ENCODE measurements at regions of chr11 and their contacts with region 1.

Region 1: DNA sequence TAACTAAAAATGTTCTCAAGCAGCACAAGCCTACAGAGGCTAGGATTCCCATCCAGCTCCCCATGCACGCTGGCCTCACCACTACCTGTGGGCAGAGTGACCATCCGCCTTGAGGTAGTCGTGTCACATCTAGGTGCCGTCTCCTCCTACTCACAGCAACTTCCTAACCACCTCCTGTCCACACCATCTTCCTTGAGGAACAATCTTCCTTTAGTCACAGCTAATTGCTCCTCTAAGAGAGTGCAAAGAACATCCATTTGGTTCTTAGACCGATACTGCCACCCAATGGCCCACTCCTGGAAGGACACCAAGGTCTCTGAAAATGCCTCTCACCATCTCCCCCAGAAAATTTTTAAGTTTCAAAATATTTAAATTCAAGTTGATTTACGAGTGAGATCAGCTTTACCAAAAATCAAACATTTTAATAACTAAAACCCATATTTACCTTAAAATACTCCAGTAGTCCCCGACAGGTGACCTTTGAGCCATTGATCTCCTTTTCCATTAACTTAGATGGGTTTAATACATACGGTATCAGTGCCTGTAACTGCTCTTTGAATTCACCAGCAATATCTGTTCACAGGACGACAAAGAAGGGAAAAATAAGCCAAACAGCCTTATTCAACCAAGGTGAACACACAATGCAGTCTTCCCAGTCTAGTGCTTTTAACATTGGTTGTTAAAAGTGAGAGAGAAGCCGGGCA is 21.7 kb upstream of the PLAAT3 start:
- DNase-seq: peak; percentile 70 to 81
- ATAC-seq: peak; percentile 88
- H3K4me3 ChIP-seq: no peak overlapping the region
- H3K27ac ChIP-seq: 0 out of 6 replicates have a peak overlapping the region, but pooled peaks of 1 of the 2 experiments have one; percentile 10
- H3K4me1 ChIP-seq: peaks cover 17% of the 10 kb centered on the region
- CTCF ChIP-seq: peak; percentile 91
- EP300 ChIP-seq: no peak
- POLR2A ChIP-seq: no peak
- RAD21 ChIP-seq: peak; percentile 91 to 93

Region 2: DNA sequence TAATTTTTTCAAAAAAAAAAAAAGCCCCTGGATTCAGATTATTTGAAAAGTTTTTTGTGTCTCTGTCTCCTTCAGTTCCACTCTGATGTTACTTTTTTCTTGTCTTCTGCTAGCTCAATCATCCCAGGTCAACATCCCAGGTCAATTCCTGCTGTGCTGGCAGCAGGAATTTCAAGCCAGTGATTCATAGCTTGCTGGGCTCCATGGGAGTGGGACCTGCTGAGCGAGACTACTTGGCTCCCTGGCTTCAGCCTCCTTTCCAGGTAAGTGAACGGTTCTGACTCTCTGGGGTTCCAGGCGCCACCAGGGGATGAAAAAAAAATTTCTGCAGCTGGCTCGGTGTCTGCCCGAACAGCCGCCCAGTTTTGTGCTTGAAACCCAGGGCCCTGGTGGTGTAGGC is 176.3 kb before region 1 on chr11:
- CTCF ChIA-PET with region 1: no interaction called
- POLR2A ChIA-PET with region 1: no interaction called
- DNase-seq: no peak
- ATAC-seq: no peak
- H3K4me3 ChIP-seq: no peak overlapping the region
- H3K27ac ChIP-seq: no peak overlapping the region
- H3K4me1 ChIP-seq: no peaks in the 10 kb centered on the region
- CTCF ChIP-seq: no peak
- EP300 ChIP-seq: no peak
- POLR2A ChIP-seq: no peak
- RAD21 ChIP-seq: no peak

Region 3: DNA sequence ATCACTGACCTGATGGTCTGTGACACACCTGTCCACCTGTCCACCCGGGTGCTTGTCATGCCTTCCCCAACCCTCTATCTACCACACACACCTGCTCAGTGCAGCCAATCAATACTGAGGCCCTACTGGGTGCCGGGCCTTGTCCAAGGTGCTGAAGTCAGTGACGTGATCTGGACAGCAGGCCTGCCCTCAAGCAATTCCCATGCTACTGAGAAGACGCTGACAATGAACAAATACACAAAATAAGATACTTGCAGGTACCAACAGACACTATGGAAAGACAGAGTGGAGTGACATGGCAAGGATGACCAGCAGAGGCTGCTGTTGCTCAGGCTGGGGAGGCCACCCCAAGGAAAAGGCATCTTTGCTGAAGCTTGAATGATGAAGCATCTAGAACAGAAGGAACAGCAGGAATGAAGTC is 42.9 kb before region 1 on chr11:
- CTCF ChIA-PET with region 1: interaction called, 14 read pairs
- POLR2A ChIA-PET with region 1: no interaction called
- DNase-seq: peak; percentile 45 to 62
- ATAC-seq: peak; percentile 72 to 90; a peak in 5 of 6 replicates
- H3K4me3 ChIP-seq: no peak overlapping the region
- H3K27ac ChIP-seq: no peak overlapping the region
- H3K4me1 ChIP-seq: peaks cover 7% of the 10 kb centered on the region; the same call in 1 of the 3 replicates
- CTCF ChIP-seq: peak; percentile 62
- EP300 ChIP-seq: no peak
- POLR2A ChIP-seq: no peak
- RAD21 ChIP-seq: peak; percentile 68 to 88; a peak in 4 of 5 replicates

Region 4: GRCh38 chr11:63621931-63622782 is 13.8 kb before region 1 on chr11:
- CTCF ChIA-PET with region 1: interaction called, 22 read pairs
- POLR2A ChIA-PET with region 1: no interaction called
- DNase-seq: peak; percentile 35 to 51
- ATAC-seq: peak; percentile 58 to 61; a peak in 5 of 6 replicates
- H3K4me3 ChIP-seq: no peak overlapping the region
- H3K27ac ChIP-seq: no peak overlapping the region
- H3K4me1 ChIP-seq: peaks cover 19% of the 10 kb centered on the region
- CTCF ChIP-seq: no peak
- EP300 ChIP-seq: no peak
- POLR2A ChIP-seq: no peak
- RAD21 ChIP-seq: no peak

Region 5: GRCh38 chr11:63652671-63653070 is 16.8 kb after region 1 on chr11:
- CTCF ChIA-PET with region 1: interaction called, 10 read pairs
- POLR2A ChIA-PET with region 1: no interaction called
- DNase-seq: no peak
- ATAC-seq: no peak
- H3K4me3 ChIP-seq: no peak overlapping the region
- H3K27ac ChIP-seq: no peak overlapping the region
- H3K4me1 ChIP-seq: no peaks in the 10 kb centered on the region
- CTCF ChIP-seq: no peak
- EP300 ChIP-seq: no peak
- POLR2A ChIP-seq: no peak
- RAD21 ChIP-seq: no peak

Region 6: GRCh38 chr11:63671322-63672155 is 35.6 kb after region 1 on chr11 and contains the start of gene ATL3:
- CTCF ChIA-PET with region 1: interaction called, 14 read pairs
- POLR2A ChIA-PET with region 1: no interaction called
- DNase-seq: peak; percentile 90 to 99
- ATAC-seq: peak; percentile 89 to 91
- H3K4me3 ChIP-seq: peak within 1 kb of the TSS; percentile 73
- H3K27ac ChIP-seq: peak within 1 kb of the TSS; percentile 96
- H3K4me1 ChIP-seq: peaks cover 55% of the 10 kb centered on the region
- CTCF ChIP-seq: no peak
- EP300 ChIP-seq: no peak
- POLR2A ChIP-seq: peak; percentile 61
- RAD21 ChIP-seq: no peak
- polyA plus RNA-seq, gene ATL3: 45.4 and 50.8 TPM in 2 replicates